Activated CD4-positive, alpha-beta T cell treated with anti-CD3 and anti-CD28 coated beads, Interleukin-2, amount 10 ng/mL, durations not matched to agents 24 days and 14 days (primary cell): ENCODE measurements at regions of chr10 and their contacts with region 1.

Region 1: GRCh38 chr10:69644658-69645295 is 14.7 kb downstream of the FAM241B start:
- DNase-seq: peak; percentile 83
- H3K4me3 Mint-ChIP-seq: no peak overlapping the region
- H3K27ac Mint-ChIP-seq: no peak overlapping the region
- H3K4me1 Mint-ChIP-seq: no peaks in the 10 kb centered on the region
- H3K27me3 Mint-ChIP-seq: peaks cover 4% of the 10 kb centered on the region

Region 2: GRCh38 chr10:69716711-69717560 is 72.2 kb after region 1 on chr10:
- intact Hi-C with region 1: loop called (anchors 1 kb)
- DNase-seq: peak; percentile 87
- H3K4me3 Mint-ChIP-seq: no peak overlapping the region
- H3K27ac Mint-ChIP-seq: no peak overlapping the region
- H3K4me1 Mint-ChIP-seq: no peaks in the 10 kb centered on the region
- H3K27me3 Mint-ChIP-seq: peaks cover 6% of the 10 kb centered on the region

Region 3: GRCh38 chr10:69749178-69750010 is 104.6 kb after region 1 on chr10:
- intact Hi-C with region 1: no loop called
- DNase-seq: no peak
- H3K4me3 Mint-ChIP-seq: no peak overlapping the region
- H3K27ac Mint-ChIP-seq: no peak overlapping the region
- H3K4me1 Mint-ChIP-seq: peaks cover 2% of the 10 kb centered on the region
- H3K27me3 Mint-ChIP-seq: peaks cover 33% of the 10 kb centered on the region

Region 4: DNA sequence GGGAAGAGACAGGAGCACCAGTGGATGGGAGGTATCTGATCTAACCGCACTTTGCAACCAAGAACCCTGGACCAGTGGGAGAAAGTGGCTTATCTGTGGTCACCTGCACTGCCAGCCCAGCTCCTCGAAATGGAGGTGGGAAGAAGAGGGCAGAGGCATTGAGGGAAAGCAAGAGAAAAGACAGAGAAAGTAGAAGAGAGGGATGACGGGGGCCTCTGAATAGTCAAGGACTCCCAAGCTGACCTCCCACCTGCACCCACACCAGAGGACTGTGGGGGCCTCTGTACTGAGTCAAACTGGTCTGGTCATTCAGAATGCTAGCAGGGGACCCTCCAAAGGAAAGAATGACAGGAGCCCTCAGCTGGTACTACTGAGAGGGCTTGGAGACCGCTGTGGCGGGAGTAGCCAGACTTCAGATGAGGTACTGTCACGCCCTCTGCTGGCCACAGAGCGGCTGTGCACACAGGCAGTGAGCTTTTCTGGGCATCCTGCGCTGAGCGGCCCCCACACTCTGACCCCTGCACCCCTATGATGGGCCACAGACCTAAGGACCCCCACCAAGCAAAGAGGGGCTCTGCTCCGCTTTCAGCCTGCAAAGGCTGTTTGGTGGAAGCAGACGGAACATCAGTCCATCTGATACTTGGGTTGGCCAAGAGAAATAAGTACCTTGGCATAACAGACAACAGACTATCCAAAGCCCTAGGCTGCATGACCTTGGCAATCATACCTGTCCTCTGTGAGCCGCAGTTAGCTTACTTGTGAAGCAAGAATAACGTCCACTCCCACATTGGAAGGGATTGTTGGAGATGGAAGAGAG is 269.8 kb after region 1 on chr10:
- intact Hi-C with region 1: loop called (anchors 2 kb)
- DNase-seq: peak; percentile 86
- H3K4me3 Mint-ChIP-seq: no peak overlapping the region
- H3K27ac Mint-ChIP-seq: no peak overlapping the region
- H3K4me1 Mint-ChIP-seq: no peaks in the 10 kb centered on the region
- H3K27me3 Mint-ChIP-seq: peaks cover 7% of the 10 kb centered on the region

Region 5: GRCh38 chr10:69974551-69975155 is 329.9 kb after region 1 on chr10:
- intact Hi-C with region 1: no loop called
- DNase-seq: no peak
- H3K4me3 Mint-ChIP-seq: no peak overlapping the region
- H3K27ac Mint-ChIP-seq: no peak overlapping the region
- H3K4me1 Mint-ChIP-seq: no peaks in the 10 kb centered on the region
- H3K27me3 Mint-ChIP-seq: peaks cover 33% of the 10 kb centered on the region